ENCODE measurements at regions of chr19 and their contacts with region 1.

Region 1: GRCh38 chr19:46404055-46404752 is 9.2 kb downstream of the CCDC8 start:
- DNase-seq: no peak
- ATAC-seq: no peak
- H3K4me3 Mint-ChIP-seq: peak overlapping the region; percentile 47
- H3K27ac Mint-ChIP-seq: no peak overlapping the region
- H3K4me1 Mint-ChIP-seq: peaks cover 13% of the 10 kb centered on the region
- H3K27me3 Mint-ChIP-seq: peaks cover 56% of the 10 kb centered on the region
- CTCF ChIP-seq: no peak

Region 2: DNA sequence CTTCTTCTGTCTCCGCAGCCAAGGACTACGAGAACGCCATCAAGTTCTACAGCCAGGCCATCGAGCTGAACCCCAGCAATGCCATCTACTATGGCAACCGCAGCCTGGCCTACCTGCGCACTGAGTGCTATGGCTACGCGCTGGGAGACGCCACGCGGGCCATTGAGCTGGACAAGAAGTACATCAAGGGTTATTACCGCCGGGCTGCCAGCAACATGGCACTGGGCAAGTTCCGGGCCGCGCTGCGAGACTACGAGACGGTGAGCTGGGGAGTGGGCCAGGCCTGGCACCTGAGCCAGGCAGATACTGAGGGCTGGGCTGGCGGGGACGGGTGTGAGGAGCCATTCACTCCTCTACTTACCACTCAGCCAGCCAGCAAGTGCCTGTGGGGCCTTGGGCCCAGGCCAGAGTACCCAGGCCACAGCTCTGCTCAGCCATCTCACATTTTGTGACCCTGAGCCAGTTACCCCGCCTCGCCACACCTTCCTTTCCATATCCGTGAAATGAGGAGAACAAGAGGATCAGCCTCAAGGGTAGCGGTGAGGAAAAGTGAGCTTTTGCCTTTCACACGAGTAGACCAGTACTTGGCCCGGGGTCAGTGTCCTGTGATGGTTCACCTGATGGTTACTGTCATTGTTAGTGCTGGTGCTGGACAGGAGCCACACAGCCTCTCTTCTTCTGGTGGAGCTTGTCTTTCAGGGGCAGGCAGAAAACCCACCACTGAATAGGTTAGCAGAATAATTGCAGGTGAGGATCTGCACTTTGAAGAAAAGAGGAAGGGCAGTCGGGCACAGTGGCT is 50.3 kb before region 1 on chr19:
- CTCF ChIA-PET with region 1: no interaction called
- POLR2A ChIA-PET with region 1: no interaction called
- intact Hi-C with region 1: no loop called
- DNase-seq: no peak
- ATAC-seq: no peak
- H3K4me3 Mint-ChIP-seq: no peak overlapping the region
- H3K27ac Mint-ChIP-seq: peak overlapping the region; percentile 38
- H3K4me1 Mint-ChIP-seq: peaks cover 58% of the 10 kb centered on the region
- H3K27me3 Mint-ChIP-seq: no peaks in the 10 kb centered on the region
- CTCF ChIP-seq: no peak

Region 3: GRCh38 chr19:46392243-46392801 is 11.9 kb before region 1 on chr19:
- CTCF ChIA-PET with region 1: interaction called, 11 read pairs
- POLR2A ChIA-PET with region 1: no interaction called
- intact Hi-C with region 1: no loop called
- DNase-seq: no peak
- ATAC-seq: no peak
- H3K4me3 Mint-ChIP-seq: no peak overlapping the region
- H3K27ac Mint-ChIP-seq: peak overlapping the region; percentile 43
- H3K4me1 Mint-ChIP-seq: peaks cover 8% of the 10 kb centered on the region
- H3K27me3 Mint-ChIP-seq: no peaks in the 10 kb centered on the region
- CTCF ChIP-seq: no peak

Region 4: DNA sequence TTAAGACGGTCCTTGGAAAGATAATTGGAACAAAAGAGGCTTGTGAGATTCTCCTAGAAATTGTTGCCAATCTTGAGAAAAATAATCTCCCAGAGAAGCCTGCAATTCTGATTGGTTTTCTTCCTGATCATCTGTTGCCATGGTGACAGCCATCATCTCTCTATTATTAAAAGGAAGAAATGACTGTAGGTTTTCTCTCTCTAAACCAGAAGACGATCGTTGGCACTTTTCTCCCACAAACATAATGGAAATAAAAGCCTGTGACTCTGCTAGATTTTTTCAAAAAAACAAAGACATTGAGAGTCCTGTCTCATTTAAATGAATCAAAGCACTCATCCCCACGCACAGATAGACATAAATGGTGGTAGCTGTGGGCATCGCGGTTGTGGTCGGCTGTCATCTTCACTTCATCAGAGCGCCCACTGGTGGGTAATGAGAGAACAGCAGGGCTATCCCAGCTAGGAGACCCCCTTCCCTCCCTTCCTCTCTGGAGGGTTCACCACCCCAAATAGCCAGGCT is 175.2 kb after region 1 on chr19:
- CTCF ChIA-PET with region 1: no interaction called
- POLR2A ChIA-PET with region 1: no interaction called
- intact Hi-C with region 1: no loop called
- DNase-seq: peak; percentile 76
- ATAC-seq: peak; percentile 47
- H3K4me3 Mint-ChIP-seq: no peak overlapping the region
- H3K27ac Mint-ChIP-seq: no peak overlapping the region
- H3K4me1 Mint-ChIP-seq: peaks cover 18% of the 10 kb centered on the region
- H3K27me3 Mint-ChIP-seq: no peaks in the 10 kb centered on the region
- CTCF ChIP-seq: peak; percentile 56

Measured in activated CD8-positive, alpha-beta T cell treated with anti-CD3 and anti-CD28 coated beads for 36 hours (primary cell).